OCI-LY7 (cell line): ENCODE measurements at regions of chr18 and their contacts with region 1.

Region 1: GRCh38 chr18:11733031-11733430 is 44.0 kb downstream of the GNAL start:
- DNase-seq: peak; percentile 71
- H3K4me3 ChIP-seq: peak overlapping the region; percentile 21
- H3K27ac ChIP-seq: no peak overlapping the region
- H3K4me1 ChIP-seq: no peaks in the 10 kb centered on the region
- CTCF ChIP-seq: peak; percentile 93

Region 2: GRCh38 chr18:11654736-11655605 is 78.1 kb before region 1 on chr18:
- CTCF ChIA-PET with region 1: interaction called, 7 read pairs
- POLR2A ChIA-PET with region 1: interaction called, 3 read pairs
- intact Hi-C with region 1: loop called (anchors 1 kb)
- DNase-seq: peak; percentile 53
- H3K4me3 ChIP-seq: no peak overlapping the region
- H3K27ac ChIP-seq: no peak overlapping the region
- H3K4me1 ChIP-seq: no peaks in the 10 kb centered on the region
- CTCF ChIP-seq: peak; percentile 91

Region 3: DNA sequence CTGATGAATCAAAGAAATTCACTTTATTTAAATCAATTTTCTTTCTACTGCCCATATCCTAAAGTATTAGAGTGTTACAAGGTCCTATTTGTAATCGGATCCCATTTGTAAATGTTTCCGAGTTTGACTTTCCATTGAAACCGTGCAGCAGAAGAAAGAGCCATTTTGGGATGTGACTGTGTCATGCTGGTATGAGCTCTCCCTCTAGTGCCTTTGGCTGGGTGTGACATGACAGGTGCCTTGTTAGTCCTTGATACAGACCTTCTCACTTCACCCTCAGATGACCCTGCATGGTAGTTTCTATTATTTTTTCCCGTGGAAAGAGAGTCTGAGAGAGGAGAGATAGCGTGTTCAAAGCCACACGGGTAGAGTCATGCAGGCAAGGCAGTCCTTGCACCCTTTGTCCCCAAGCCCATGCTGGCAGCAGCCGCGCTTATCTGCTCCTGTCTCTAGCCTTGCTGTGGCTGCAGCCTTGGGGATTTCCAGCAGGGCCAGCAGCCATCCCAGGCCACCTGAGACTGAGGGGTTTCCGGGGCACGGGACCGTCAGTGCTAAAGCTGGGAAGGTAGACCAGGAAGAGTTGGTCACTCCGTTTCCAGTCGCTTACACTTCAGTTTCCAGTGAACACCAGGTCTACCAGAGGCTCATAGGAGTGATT is 139.6 kb after region 1 on chr18:
- CTCF ChIA-PET with region 1: no interaction called
- POLR2A ChIA-PET with region 1: interaction called, 4 read pairs
- intact Hi-C with region 1: loop called (anchors 2 kb)
- DNase-seq: peak; percentile 64
- H3K4me3 ChIP-seq: no peak overlapping the region
- H3K27ac ChIP-seq: no peak overlapping the region
- H3K4me1 ChIP-seq: peaks cover 17% of the 10 kb centered on the region
- CTCF ChIP-seq: peak; percentile 74

Region 4: DNA sequence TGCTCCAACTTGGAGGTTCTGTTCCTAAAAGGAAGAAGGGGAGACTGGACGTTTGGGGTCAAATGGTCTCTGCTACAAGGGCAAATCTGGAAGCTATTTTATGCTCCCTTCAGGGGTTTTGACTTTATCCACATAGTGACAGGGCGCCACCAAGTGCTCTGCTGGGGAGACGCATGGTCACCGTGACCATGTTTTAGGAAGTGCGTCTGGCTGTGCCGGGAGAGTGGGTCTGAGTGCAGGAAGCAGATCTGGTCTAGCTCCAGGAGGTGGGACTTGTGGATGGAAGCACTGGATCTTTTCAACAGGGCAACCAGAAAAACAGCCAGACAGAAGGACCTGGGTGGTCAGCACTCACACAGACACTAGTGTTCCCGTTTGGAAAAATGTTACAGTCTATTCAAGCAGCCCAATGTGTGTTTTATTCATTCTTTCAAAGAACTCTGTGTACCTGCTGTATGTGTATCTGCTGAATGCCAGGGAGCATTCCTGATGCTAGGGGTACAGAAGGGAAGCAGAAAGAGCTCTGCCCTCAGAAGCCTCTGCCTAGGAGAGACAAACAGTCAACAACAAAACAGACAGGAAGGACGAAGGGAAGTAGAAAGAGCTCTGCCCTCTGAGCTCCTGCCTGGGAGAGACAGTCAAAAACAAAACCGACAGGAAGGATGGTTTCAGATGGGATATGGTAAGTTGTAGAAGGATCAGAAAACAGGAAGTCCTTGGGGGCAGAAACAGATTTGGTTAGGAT is 262.6 kb after region 1 on chr18:
- CTCF ChIA-PET with region 1: no interaction called
- POLR2A ChIA-PET with region 1: interaction called, 3 read pairs
- intact Hi-C with region 1: loop called (anchors 2 kb)
- DNase-seq: peak; percentile 76
- H3K4me3 ChIP-seq: peak overlapping the region; percentile 20
- H3K27ac ChIP-seq: peak overlapping the region; percentile 25
- H3K4me1 ChIP-seq: peaks cover 28% of the 10 kb centered on the region
- CTCF ChIP-seq: peak; percentile 89